ENCODE measurements at regions of chr6 and their contacts with region 1.

Region 1: GRCh38 chr6:42009966-42010891 is 40.1 kb upstream of the TAF8 start:
- DNase-seq: no peak
- H3K4me3 Mint-ChIP-seq: peak overlapping the region; percentile 54
- H3K27ac Mint-ChIP-seq: peak overlapping the region; percentile 93
- H3K4me1 Mint-ChIP-seq: peaks cover 59% of the 10 kb centered on the region
- H3K27me3 Mint-ChIP-seq: no peaks in the 10 kb centered on the region

Region 2: DNA sequence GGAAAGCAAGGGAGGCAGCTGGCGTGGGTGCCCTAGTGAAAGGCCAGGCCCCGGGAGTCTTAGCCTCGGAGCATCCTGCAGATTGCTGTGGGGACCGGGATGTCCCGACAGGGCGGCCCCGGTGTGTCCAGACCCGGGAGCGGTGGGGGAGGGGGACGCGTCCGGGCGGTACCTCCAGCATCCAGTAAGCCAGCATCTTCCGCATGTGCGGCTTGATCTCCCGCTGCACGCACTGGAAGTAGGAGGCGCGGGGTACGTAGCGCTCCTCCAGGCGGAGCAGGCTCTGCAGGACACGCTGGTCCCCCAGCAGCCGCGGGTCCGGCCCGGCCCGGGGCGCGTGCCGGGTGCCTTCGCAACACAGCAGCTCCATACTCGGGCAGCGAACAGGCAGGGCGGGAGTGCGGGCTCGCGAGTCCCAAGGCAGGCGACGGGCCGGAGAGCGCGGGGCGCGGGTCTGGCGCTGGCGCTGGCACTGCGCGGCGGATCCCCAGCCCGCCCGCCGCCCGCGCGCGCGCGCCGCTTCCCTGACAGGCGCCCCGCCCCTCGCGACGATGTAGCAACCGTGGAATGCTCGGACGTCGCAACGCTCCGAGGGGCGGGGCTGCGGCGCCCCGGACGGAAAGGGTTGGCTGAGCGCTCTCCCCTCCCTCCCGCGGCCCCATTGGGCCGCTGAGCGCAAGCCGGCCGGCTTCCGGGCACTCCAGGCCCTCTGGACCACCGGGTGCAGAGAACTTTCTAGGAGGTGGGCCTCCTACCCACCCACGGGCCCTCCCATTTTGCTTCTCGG is 68.8 kb before region 1 on chr6 and contains the start of gene CCND3:
- intact Hi-C with region 1: loop called (anchors 2 kb)
- DNase-seq: peak; percentile 87
- H3K4me3 Mint-ChIP-seq: peak within 1 kb of the TSS; percentile 93
- H3K27ac Mint-ChIP-seq: peak within 1 kb of the TSS; percentile 87
- H3K4me1 Mint-ChIP-seq: peaks cover 44% of the 10 kb centered on the region
- H3K27me3 Mint-ChIP-seq: no peaks in the 10 kb centered on the region
- total RNA-seq, gene CCND3: 207 and 217 TPM in 2 replicates

Region 3: DNA sequence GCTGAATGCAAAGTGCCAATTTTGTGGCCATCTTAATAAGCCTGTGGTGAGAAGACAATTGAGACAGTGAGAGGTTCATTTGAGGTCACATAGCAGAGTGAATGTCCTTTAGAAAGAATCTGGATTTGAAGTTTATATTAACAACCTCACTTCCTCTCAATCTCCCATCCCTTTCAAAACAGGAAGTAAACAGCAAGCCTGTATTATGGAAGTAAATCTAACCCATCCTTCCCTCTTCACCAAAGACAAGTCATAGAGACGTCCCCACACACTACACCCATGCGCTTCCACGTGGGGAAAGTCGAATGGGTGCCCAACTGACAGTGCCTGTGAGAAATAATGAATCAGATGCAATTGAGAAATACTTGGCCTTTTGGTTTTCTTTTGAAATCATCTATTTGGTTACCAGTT is 39.8 kb before region 1 on chr6:
- intact Hi-C with region 1: loop called (anchors 5 kb)
- DNase-seq: no peak
- H3K4me3 Mint-ChIP-seq: peak overlapping the region; percentile 14
- H3K27ac Mint-ChIP-seq: peak overlapping the region; percentile 93
- H3K4me1 Mint-ChIP-seq: peaks cover 29% of the 10 kb centered on the region
- H3K27me3 Mint-ChIP-seq: no peaks in the 10 kb centered on the region